Common myeloid progenitor, CD34-positive (primary cell): ENCODE measurements at regions of chr14 and their contacts with region 1.

Region 1: DNA sequence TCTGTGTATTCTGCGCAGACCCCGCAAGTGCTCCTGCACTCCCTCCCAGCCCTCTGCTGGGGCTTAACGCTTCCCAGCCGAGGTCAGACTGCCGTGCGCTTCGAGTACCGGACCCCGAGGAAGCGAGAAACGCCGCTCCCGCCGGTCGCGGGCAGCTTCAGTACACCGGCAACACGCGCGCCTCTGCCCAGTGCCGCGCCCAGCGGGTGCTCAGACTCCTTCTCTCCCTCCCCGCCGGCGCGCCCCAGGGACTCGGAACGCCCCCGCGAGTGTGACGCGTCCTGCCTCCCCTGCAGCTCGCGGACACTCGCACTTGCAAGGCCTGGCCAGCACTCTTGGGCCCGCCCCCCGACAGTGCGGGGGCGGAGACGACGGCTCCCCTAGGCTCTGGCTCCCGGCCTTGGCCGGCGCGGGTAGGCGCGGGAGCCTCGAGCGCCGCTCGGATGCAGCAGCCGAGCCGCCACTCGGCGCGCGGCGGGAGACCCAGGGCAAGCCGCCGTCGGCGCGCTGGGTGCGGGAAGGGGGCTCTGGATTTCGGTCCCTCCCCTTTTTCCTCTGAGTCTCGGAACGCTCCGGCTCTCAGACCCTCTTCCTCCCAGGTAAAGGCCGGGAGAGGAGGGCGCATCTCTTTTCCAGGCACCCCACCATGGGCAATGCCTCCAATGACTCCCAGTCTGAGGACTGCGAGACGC is at the start of gene PTGER2:
- DNase-seq: peak; percentile 74 to 95 (median 90)
- H3K4me3 ChIP-seq: peak within 1 kb of the TSS; percentile 54 to 96 (median 90)
- H3K27ac ChIP-seq: peak within 1 kb of the TSS; percentile 77 to 88
- H3K4me1 ChIP-seq: peaks cover 53 to 94% (median 88%) of the 10 kb centered on the region in 4 experiments
- H3K27me3 ChIP-seq: no peaks in the 10 kb centered on the region

Region 2: DNA sequence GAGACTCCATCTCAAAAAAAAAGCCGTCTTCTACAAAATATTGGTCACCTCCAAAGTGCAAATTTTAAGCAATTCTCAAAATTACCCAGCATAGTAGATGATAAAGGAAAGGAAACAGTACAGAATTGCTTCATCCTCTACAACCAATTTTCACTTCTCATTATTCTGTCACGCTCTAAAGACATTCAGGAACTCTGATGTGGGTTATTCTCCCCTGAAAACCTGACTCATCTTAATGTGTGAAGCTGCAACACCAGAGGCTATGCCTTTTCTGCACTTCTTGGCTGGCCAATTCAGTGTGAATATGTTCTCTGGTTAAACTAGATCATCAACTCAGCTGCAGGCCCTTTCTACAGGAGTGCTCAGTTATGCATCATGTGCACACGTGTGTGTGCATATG is 11.1 kb after region 1 on chr14:
- CTCF ChIA-PET with region 1: interaction called, 10 read pairs
- POLR2A ChIA-PET with region 1: no interaction called
- DNase-seq: peak in 2 of 3 donors; percentile 79 to 82
- H3K4me3 ChIP-seq: no peak overlapping the region
- H3K27ac ChIP-seq: no peak overlapping the region
- H3K4me1 ChIP-seq: peaks cover 7 to 24% (median 10%) of the 10 kb centered on the region in 4 experiments
- H3K27me3 ChIP-seq: no peaks in the 10 kb centered on the region